ENCODE measurements at regions of chr6 and their contacts with region 1.

Region 1: DNA sequence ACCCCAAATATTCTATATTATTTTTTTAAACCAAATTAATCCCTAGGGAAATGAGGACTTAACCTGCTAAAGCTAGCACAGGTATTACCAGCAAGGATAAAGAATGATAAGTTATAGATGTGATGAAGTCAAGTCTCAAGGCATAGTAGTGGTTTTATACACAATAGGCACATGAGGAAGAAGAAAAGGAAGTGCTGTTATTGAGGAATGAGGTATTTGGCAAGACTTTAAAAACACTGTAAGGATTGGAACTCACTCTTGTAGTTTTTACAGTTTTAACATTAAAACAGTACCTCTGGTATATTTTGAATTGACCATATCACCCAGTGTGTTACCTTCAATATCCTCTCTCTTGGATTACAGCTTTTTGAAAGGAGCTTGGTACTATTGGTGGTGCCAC is 54.6 kb downstream of the PHF3 start:
- DNase-seq: no peak
- ATAC-seq: no peak
- H3K4me3 ChIP-seq: no peak overlapping the region
- H3K27ac ChIP-seq: no peak overlapping the region
- H3K4me1 ChIP-seq: no peaks in the 10 kb centered on the region
- H3K27me3 ChIP-seq: no peaks in the 10 kb centered on the region
- CTCF ChIP-seq: no peak

Region 2: GRCh38 chr6:63352587-63353285 is 337.5 kb before region 1 on chr6:
- intact Hi-C with region 1: loop called in 1 of 2 experiments (anchors 5 kb)
- DNase-seq: no peak
- ATAC-seq: peak; percentile 64 to 95 (median 76)
- H3K4me3 ChIP-seq: peak overlapping the region; percentile 21
- H3K27ac ChIP-seq: peak overlapping the region; percentile 10
- H3K4me1 ChIP-seq: peaks cover 4% of the 10 kb centered on the region
- H3K27me3 ChIP-seq: no peaks in the 10 kb centered on the region
- CTCF ChIP-seq: peak; percentile 62

Region 3: DNA sequence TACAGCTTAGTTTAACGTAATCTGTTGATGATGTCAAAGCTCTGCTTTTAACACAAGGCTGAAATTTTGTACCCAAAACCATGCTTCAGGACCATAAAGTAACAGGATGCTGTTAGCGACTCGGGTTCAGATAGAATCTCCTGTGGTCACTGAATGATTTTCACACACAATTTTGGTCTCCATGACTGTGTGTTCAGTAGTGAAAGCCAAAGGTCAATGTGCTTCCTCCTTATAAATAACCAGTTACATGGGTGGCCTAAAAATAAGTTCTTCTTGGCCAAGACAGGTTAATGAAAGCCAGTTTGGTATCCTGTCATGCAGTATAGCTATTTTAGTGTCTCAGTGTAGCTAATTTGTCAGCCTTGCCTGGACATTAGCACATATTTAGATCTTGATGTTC is 137.0 kb before region 1 on chr6:
- intact Hi-C with region 1: no loop called
- DNase-seq: no peak
- ATAC-seq: peak; percentile 95 to 99 (median 98)
- H3K4me3 ChIP-seq: peak overlapping the region; percentile 11
- H3K27ac ChIP-seq: peak overlapping the region; percentile 88
- H3K4me1 ChIP-seq: peaks cover 20% of the 10 kb centered on the region
- H3K27me3 ChIP-seq: no peaks in the 10 kb centered on the region
- CTCF ChIP-seq: no peak

Region 4: DNA sequence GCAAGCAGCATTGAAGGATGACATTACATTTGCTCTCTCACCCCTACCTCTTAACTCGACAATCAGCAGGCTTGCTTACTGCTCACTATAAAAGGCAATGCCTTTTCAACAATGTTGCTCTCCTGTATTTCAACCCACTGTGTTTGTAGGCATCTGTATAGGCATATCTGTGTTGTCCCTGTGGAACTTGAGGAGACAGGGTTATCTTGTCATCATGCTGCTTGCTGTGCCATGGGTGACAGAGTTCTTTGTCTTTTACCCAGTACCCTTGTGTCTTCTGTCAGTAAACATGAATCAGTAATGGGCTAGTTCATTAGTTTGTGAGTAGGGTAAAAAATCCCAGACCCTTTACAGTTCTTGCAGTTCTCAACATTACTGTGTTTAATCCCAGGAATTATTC is 29.5 kb before region 1 on chr6:
- intact Hi-C with region 1: no loop called
- DNase-seq: no peak
- ATAC-seq: no peak
- H3K4me3 ChIP-seq: no peak overlapping the region
- H3K27ac ChIP-seq: no peak overlapping the region
- H3K4me1 ChIP-seq: peaks cover 52% of the 10 kb centered on the region
- H3K27me3 ChIP-seq: no peaks in the 10 kb centered on the region
- CTCF ChIP-seq: no peak

Region 5: GRCh38 chr6:64293298-64293697 is 603.1 kb after region 1 on chr6:
- intact Hi-C with region 1: no loop called
- DNase-seq: no peak
- ATAC-seq: no peak
- H3K4me3 ChIP-seq: no peak overlapping the region
- H3K27ac ChIP-seq: no peak overlapping the region
- H3K4me1 ChIP-seq: no peaks in the 10 kb centered on the region
- H3K27me3 ChIP-seq: no peaks in the 10 kb centered on the region
- CTCF ChIP-seq: no peak